PC-9 (cell line): ENCODE measurements at regions of chr3 and their contacts with region 1.

Region 1: DNA sequence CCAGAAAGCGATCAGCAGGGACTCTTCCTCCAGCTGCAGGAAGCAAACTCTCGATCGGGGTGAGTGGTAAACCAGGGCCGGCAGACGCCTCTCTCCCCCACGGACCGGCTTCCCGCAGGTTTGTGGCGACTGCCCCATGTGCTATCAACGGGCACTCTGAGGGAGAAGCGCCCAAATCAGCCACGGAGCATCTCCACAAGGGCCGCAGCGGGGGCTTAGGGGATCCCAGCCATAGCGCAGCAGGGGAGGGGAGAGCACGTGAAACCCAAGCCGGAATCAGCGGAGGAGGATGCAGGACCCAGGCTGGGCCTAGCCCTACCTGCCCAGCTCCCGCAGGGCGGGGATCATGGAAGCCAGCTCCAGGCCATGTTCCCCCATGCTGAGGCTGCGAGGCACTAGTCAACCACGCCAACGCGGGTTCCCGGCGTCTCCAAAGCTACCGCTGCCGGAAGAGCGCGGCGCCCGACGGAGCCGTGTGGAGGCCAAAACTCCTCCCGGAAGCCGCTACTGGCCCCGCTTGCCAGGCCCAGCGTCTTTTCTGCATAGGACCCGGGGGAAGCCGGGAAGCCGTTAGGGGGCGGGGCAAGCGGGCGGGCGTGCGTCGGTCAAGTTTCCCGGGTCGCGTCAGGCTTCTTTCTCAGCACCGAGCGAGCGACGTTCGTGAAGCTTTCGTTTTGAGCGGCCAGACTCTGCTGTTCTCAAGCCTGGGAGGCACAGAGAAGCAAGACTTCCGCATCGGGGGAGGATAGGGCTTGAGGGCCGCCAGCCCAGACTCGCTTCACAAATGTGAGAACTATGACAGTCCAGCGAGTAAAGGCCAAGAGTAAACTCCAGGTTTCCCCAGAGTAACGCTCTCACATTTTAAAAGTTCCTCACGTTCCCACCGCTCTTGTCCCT is at the start of gene ATR:
- DNase-seq: peak; percentile 89 to 98
- H3K4me3 ChIP-seq: peak within 1 kb of the TSS; percentile 98
- H3K27ac ChIP-seq: peak within 1 kb of the TSS; percentile 81
- H3K4me1 ChIP-seq: peaks cover 28% of the 10 kb centered on the region
- H3K27me3 ChIP-seq: no peaks in the 10 kb centered on the region
- CTCF ChIP-seq: no peak
- total RNA-seq, gene ATR: 28.3 and 33.3 TPM in 2 replicates

Region 2: DNA sequence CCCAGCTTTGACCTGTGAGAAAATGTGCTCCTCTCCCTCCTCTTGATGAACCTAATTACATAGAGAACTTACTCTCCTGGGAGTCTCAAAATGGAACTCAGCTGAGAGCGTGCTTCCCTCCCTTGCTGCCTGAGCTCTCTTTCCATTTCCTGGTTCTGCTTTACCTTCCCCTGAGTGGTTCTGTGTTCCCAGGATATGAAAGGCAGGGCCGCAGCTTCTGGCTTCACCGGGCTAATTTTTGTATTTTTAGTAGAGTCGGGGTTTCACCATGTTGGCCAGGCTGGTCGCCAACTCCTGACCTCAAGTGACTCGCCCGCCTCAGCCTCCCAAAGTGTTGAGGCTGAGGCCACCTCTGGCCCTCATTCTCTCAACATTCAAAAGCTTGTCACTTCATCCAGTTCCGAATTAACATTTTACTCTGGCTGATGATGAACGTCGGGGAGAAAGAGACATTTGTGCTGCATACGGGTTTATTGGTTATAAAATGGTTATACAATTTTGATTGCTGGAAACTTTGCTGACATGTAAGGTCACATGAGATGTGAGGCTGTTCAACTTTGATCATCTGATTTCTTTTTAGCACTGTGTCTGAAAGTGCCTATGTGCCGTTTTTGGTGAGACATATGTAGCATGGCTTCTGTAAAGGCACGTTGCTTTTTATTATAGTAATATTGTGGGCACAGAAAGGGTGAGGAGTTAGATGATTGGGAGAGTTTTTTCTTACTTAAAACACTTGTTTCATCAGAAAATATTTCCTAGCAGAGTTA is 24.2 kb after region 1 on chr3:
- CTCF ChIA-PET with region 1: no interaction called
- POLR2A ChIA-PET with region 1: no interaction called
- intact Hi-C with region 1: no loop called
- DNase-seq: no peak
- H3K4me3 ChIP-seq: no peak overlapping the region
- H3K27ac ChIP-seq: no peak overlapping the region
- H3K4me1 ChIP-seq: peaks cover 9% of the 10 kb centered on the region
- H3K27me3 ChIP-seq: no peaks in the 10 kb centered on the region
- CTCF ChIP-seq: no peak

Region 3: DNA sequence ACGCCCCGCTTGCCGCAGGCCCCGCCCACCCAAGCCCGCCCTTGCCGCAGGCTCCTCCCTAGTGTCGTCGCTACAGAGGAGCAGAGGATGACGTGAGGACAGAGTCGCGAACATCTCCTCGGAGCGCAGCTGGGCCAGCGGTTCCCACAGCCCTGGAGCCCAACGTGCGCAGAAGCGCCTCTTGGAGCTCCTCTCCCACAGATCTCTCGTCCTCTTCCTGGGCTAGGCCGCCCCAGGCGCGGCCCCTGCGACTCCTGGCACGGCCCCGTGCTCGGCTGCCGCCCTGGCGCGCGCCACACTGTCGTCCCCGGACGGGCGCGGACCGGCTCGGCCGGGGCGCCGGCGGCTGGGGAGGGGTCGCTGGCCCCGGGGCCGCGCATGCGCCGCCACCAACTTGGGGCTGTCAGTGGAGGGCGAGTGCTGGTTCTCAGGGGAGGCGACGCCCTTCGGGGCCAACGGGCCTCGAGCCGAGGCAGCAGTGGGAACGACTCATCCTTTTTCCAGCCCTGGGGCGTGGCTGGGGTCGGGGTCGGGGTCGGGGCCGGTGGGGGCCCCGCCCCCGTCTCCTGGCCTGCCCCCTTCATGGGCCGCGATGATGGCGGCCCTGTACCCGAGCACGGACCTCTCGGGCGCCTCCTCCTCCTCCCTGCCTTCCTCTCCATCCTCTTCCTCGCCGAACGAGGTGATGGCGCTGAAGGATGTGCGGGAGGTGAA is 145.6 kb after region 1 on chr3 and contains the start of gene TRPC1:
- CTCF ChIA-PET with region 1: no interaction called
- POLR2A ChIA-PET with region 1: no interaction called
- intact Hi-C with region 1: loop called (anchors 5 kb)
- DNase-seq: peak; percentile 56 to 73
- H3K4me3 ChIP-seq: peak within 1 kb of the TSS; percentile 76
- H3K27ac ChIP-seq: no peak within 1 kb of the TSS
- H3K4me1 ChIP-seq: no peaks in the 10 kb centered on the region
- H3K27me3 ChIP-seq: no peaks in the 10 kb centered on the region
- CTCF ChIP-seq: no peak
- total RNA-seq, gene TRPC1: 3.8 and 6.9 TPM in 2 replicates

Region 4: DNA sequence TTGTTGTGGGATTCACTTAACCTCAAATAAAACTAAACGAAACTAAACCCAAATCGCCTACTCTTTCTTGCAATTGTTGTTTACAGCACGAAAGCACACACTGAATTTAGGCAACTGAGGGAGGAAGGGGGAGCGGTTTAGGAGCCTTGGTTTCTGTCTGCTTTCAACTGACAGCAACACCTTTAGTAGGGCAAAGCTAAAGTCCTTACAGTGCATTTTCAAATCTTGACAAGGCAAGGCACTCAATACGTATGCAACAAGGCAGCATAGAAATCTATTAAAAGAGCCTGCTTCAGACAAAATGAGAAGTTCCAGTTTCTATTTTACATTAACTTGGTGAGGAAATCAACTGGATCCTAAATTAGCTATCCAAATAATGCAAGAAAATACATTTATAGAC is 715.6 kb after region 1 on chr3:
- CTCF ChIA-PET with region 1: no interaction called
- POLR2A ChIA-PET with region 1: no interaction called
- intact Hi-C with region 1: no loop called
- DNase-seq: no peak
- H3K4me3 ChIP-seq: no peak overlapping the region
- H3K27ac ChIP-seq: no peak overlapping the region
- H3K4me1 ChIP-seq: no peaks in the 10 kb centered on the region
- H3K27me3 ChIP-seq: no peaks in the 10 kb centered on the region
- CTCF ChIP-seq: no peak